ENCODE measurements at regions of chr6 and their contacts with region 1.

Region 1: GRCh38 chr6:34771727-34772126 is 14.4 kb downstream of the SNRPC start:
- H3K4me3 Mint-ChIP-seq: no peak overlapping the region
- H3K27ac Mint-ChIP-seq: peak overlapping the region; percentile 59
- H3K4me1 Mint-ChIP-seq: peaks cover 34% of the 10 kb centered on the region
- H3K27me3 Mint-ChIP-seq: no peaks in the 10 kb centered on the region

Region 2: DNA sequence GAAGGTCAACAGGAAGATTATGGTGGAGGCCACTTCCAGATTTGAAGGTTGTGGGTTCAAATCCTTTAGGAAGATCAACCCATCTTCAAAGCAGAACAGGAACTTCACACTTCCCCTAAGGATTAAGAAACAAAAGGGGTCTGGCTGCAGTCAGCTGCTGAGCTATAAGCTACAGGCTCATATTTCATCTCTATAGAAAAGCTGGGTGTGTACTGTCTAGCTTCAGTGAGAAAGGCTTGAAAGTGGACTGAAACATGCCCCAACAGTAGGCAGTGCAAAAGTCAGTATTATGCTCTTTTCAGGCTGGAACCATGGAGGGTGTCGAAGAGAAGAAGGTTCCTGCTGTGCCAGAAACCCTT is 155.5 kb before region 1 on chr6:
- intact Hi-C with region 1: no loop called
- H3K4me3 Mint-ChIP-seq: no peak overlapping the region
- H3K27ac Mint-ChIP-seq: peak overlapping the region; percentile 13
- H3K4me1 Mint-ChIP-seq: peaks cover 32% of the 10 kb centered on the region
- H3K27me3 Mint-ChIP-seq: no peaks in the 10 kb centered on the region

Region 3: DNA sequence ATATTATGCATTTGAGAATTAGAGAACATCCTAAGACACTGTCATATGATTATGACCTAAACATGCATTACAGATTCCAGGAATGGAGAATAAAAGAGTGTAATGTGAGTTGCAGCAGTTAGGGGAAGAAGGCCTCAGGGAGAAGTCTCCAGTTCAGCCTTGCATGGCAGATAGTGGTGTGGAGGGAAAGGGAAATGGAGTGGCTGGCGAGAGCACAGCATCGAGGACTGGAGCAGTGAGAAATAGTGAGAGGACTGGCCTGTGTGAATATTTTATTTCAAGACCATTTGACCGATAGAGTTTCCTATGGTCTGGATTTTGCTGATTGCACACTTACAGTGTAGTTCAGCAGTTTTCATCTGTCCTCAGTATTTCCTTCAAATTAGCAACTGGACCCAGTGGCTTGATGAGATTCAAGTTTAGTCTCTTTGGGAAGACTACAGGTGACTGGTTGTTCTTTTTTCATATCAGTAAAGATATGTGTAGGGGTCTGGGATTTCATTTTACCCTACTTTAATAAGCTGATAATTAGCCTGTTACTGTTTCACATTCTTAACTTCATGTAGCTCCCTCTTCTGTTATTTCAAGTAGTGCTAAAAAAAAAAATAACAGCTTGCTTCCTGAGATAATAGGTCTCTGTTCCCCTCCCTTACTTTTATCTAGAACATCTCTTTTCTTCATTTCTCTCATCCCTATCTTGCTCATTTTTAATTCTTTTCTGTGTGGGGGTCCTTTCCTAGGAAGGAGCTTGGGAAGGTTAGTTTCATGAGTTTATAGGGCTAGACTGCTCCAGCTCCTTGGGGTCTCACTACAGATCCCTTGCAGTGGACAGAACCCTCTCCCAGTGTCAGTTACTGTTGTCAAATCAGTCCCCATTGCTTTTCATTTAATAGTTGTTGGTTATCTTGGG is 48.1 kb after region 1 on chr6:
- intact Hi-C with region 1: loop called (anchors 1 kb)
- H3K4me3 Mint-ChIP-seq: peak overlapping the region; percentile 11
- H3K27ac Mint-ChIP-seq: peak overlapping the region; percentile 91
- H3K4me1 Mint-ChIP-seq: peaks cover 33% of the 10 kb centered on the region
- H3K27me3 Mint-ChIP-seq: no peaks in the 10 kb centered on the region

Region 4: GRCh38 chr6:34887753-34888513 is 116.2 kb after region 1 on chr6 and contains the start of gene TAF11:
- intact Hi-C with region 1: loop called (anchors 5 kb)
- H3K4me3 Mint-ChIP-seq: peak within 1 kb of the TSS; percentile 100
- H3K27ac Mint-ChIP-seq: peak within 1 kb of the TSS; percentile 100
- H3K4me1 Mint-ChIP-seq: peaks cover 59% of the 10 kb centered on the region
- H3K27me3 Mint-ChIP-seq: no peaks in the 10 kb centered on the region

Measured in dendritic cell treated with granulocyte-macrophage colony-stimulating factor and Interleukin-4, amounts not matched to agents 40 ng/mL and 50 ng/mL, for 4 days (primary cell).